Activated CD4-positive, alpha-beta memory T cell treated with anti-CD3 and anti-CD28 coated beads for 36 hours (primary cell): ENCODE measurements at regions of chr5 and their contacts with region 1.

Region 1: DNA sequence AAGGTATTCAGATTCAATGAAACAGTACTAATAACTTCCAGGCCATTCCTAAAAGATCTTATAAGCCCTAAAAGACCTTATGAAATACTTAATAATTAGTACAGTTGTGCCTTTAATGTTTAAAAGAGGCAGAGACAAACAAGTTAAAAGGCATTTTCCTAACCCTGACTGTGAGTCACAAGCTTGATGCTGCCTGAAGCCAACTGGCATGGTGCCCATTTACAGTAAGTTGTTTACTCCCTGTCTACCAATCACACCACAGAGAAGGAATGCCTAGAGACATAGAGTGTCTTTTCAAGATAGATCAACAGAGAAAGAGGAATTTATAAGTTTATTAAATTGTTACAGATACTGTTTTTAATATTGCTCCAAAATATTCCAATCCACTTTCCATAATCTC is 47.8 kb downstream of the NR3C1 start:
- DNase-seq: peak; percentile 50
- H3K4me3 Mint-ChIP-seq: no peak overlapping the region
- H3K27ac Mint-ChIP-seq: no peak overlapping the region
- H3K4me1 Mint-ChIP-seq: peaks cover 75% of the 10 kb centered on the region
- H3K27me3 Mint-ChIP-seq: no peaks in the 10 kb centered on the region

Region 2: DNA sequence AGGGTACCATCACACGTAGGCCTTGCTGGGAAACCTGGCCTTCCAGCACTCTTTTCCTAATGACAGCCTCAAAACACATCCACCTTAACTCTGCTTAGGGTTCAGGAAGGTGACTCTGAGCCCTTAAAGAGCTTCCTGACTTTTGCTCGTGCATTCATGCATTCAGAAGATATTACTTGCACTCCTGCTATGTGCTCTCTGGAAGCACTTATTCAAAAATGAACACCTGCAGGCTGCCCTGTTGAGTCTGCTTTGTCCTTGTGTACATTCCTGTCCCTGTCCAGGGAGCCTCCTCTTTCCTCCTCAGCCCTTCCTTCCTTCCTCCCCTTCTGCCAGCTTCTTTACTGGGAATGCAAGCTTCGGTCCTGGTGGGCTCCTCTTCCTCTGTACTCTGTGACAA is 1092.4 kb before region 1 on chr5:
- CTCF ChIA-PET with region 1: no interaction called
- POLR2A ChIA-PET with region 1: no interaction called
- intact Hi-C with region 1: no loop called
- DNase-seq: no peak
- H3K4me3 Mint-ChIP-seq: no peak overlapping the region
- H3K27ac Mint-ChIP-seq: no peak overlapping the region
- H3K4me1 Mint-ChIP-seq: no peaks in the 10 kb centered on the region
- H3K27me3 Mint-ChIP-seq: no peaks in the 10 kb centered on the region

Region 3: DNA sequence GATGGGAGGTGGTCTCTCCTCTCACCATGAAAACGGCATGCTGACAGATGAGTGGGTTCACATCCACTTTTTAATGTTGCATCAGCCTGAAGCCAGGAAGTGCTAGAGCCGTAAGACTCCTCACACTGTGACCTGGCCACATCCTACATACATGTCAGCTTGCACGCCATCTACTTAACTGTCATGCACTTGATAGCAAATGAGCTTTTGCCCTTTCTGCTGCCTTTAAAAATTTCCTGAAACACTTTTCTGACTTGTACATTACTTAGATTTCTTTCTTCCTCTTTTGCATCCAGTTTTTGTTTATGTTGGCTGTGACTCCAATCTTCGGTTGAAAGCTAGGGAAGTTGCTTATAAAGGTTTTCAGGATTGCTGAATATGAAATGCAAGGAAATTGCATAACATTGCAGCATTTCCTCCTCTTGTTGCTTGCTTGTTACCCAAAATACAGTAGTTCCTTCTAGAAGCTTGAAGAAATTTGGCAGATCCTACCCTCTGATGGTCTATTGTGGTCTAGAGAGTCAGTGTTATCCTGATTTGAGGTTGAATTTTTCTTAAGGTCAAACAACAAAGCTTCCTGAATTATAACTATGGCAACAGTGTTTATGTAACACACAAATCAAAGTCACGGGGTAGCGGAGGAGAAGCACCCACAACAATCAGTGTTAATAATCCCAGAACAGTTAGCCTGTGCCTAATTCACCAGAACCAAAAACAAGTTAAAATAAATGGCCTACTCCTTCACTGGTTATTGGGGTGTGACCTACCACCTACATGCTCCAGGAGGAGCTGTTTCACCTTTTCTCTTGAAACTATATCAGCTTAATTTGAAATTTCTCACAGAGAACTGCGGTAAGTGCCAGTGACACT is 353.0 kb before region 1 on chr5:
- CTCF ChIA-PET with region 1: no interaction called
- POLR2A ChIA-PET with region 1: no interaction called
- intact Hi-C with region 1: loop called (anchors 5 kb)
- DNase-seq: peak; percentile 79
- H3K4me3 Mint-ChIP-seq: peak overlapping the region; percentile 52
- H3K27ac Mint-ChIP-seq: peak overlapping the region; percentile 91
- H3K4me1 Mint-ChIP-seq: peaks cover 56% of the 10 kb centered on the region
- H3K27me3 Mint-ChIP-seq: no peaks in the 10 kb centered on the region

Region 4: DNA sequence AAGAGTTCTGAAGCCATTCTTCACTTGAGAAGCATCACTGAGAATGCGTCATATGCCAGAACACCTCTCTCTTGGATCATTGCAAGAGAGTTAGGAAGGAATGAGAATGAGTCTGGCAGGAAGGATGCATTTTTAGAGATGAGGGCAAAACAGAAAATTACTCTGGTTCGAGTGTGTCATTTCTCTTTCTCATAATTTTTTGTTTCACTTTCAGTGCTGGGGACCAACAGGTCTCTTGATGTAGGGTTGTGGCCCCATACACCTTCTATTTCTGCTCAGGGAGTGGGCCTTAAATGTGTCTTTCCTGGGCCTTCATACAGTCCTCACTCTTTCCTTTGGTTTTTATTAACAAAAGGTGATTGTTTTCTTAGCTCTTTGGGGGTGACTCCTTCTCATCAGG is 254.6 kb before region 1 on chr5:
- CTCF ChIA-PET with region 1: interaction called, 3 read pairs
- POLR2A ChIA-PET with region 1: no interaction called
- intact Hi-C with region 1: loop called (anchors 5 kb)
- DNase-seq: peak; percentile 23
- H3K4me3 Mint-ChIP-seq: no peak overlapping the region
- H3K27ac Mint-ChIP-seq: peak overlapping the region; percentile 90
- H3K4me1 Mint-ChIP-seq: peaks cover 40% of the 10 kb centered on the region
- H3K27me3 Mint-ChIP-seq: no peaks in the 10 kb centered on the region

Region 5: DNA sequence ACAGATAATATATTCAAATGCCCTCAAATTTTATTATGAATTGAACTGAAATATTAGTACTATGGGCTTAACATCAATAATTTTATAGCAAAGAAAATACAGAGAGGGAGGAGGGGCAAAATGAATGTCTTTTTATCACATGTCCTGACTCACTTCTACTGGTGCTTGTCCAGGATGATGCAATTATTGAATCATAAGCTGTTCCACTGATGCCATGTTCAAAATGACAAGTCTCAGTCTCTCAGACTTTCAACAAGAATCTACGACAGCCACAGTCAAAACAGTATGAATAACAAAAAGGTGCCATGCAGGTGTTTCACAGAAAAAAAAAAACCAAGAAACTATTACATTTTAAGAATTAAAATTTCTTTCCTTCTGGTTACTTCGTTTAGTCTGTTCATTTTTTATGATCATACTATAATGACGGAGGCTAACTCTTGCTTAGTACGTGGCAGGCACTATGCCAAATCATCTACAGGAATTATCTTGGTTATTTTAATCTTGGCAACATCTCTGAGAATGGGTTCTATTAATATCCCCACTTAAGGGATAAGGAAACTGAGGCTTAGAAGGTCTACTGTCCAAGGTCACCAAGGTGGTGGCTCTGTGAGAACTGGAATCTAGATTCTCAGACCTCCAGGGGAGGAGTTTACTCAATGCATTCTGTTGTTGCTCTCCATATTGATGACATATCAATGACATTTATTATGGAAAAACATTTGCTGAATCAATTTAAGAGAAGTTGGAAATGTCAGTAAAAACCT is 13.7 kb before region 1 on chr5:
- CTCF ChIA-PET with region 1: no interaction called
- POLR2A ChIA-PET with region 1: no interaction called
- intact Hi-C with region 1: loop called (anchors 1 kb)
- DNase-seq: no peak
- H3K4me3 Mint-ChIP-seq: no peak overlapping the region
- H3K27ac Mint-ChIP-seq: peak overlapping the region; percentile 87
- H3K4me1 Mint-ChIP-seq: peaks cover 52% of the 10 kb centered on the region
- H3K27me3 Mint-ChIP-seq: no peaks in the 10 kb centered on the region

Region 6: GRCh38 chr5:143679777-143680176 is 324.1 kb after region 1 on chr5:
- CTCF ChIA-PET with region 1: no interaction called
- POLR2A ChIA-PET with region 1: no interaction called
- intact Hi-C with region 1: loop called (anchors 5 kb)
- DNase-seq: no peak
- H3K4me3 Mint-ChIP-seq: no peak overlapping the region
- H3K27ac Mint-ChIP-seq: no peak overlapping the region
- H3K4me1 Mint-ChIP-seq: peaks cover 23% of the 10 kb centered on the region
- H3K27me3 Mint-ChIP-seq: peaks cover under 1% of the 10 kb centered on the region